Left ventricle myocardium inferior (tissue), 1 donor: ENCODE measurements at regions of chr15 and their contacts with region 1.

Region 1: GRCh38 chr15:101242160-101242998 is 9.5 kb downstream of the CHSY1 start:
- DNase-seq: no peak
- H3K4me3 ChIP-seq: peak overlapping the region; percentile 33
- H3K27ac ChIP-seq: peak overlapping the region; percentile 66
- H3K4me1 ChIP-seq: peaks cover 92% of the 10 kb centered on the region
- H3K27me3 ChIP-seq: no peaks in the 10 kb centered on the region
- CTCF ChIP-seq: no peak

Region 2: GRCh38 chr15:101127506-101128076 is 114.8 kb before region 1 on chr15:
- intact Hi-C with region 1: loop called (anchors 10 kb)
- DNase-seq: peak; percentile 75
- H3K4me3 ChIP-seq: no peak overlapping the region
- H3K27ac ChIP-seq: peak overlapping the region; percentile 84
- H3K4me1 ChIP-seq: peaks cover 29% of the 10 kb centered on the region
- H3K27me3 ChIP-seq: no peaks in the 10 kb centered on the region
- CTCF ChIP-seq: no peak

Region 3: DNA sequence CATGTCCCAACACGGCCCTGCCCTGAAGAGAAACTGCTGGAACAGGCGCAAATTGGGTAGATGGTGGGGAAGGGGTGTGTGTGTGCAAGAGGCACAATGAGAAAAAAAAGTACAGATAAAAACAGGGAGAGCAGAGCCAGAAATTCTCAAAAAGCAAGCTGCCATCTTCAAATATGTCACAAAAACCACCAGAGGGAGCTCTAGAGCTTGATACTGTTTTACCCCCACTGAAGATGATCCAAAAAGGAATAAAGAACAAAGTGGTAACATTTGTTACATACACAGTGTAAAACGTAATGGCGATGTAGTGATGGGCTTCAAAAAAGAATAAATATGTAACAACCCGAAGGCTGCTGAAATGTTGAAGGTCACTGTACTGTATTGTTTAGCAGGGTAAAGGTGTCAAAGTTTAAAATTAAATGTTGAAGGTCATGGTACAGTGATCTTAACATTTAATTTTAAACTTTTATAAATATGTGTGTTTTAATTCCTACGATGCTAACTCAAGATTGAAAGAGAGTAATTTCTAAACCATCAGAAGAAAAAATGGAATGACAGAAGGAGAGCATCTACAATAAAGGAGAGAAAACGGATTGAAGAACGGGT is 46.6 kb after region 1 on chr15:
- intact Hi-C with region 1: no loop called
- DNase-seq: no peak
- H3K4me3 ChIP-seq: no peak overlapping the region
- H3K27ac ChIP-seq: no peak overlapping the region
- H3K4me1 ChIP-seq: peaks cover 32% of the 10 kb centered on the region
- H3K27me3 ChIP-seq: no peaks in the 10 kb centered on the region
- CTCF ChIP-seq: peak; percentile 71

Region 4: GRCh38 chr15:101413239-101413638 is 170.9 kb after region 1 on chr15:
- intact Hi-C with region 1: no loop called
- DNase-seq: no peak
- H3K4me3 ChIP-seq: no peak overlapping the region
- H3K27ac ChIP-seq: no peak overlapping the region
- H3K4me1 ChIP-seq: no peaks in the 10 kb centered on the region
- H3K27me3 ChIP-seq: no peaks in the 10 kb centered on the region
- CTCF ChIP-seq: no peak